ENCODE measurements at regions of chr2 and their contacts with region 1.

Region 1: GRCh38 chr2:8544786-8545694 is 136.8 kb upstream of the ID2 start:
- DNase-seq: peak; percentile 97
- H3K4me3 Mint-ChIP-seq: peak overlapping the region; percentile 10
- H3K27ac Mint-ChIP-seq: peak overlapping the region; percentile 97
- H3K4me1 Mint-ChIP-seq: peaks cover 67% of the 10 kb centered on the region
- H3K27me3 Mint-ChIP-seq: no peaks in the 10 kb centered on the region

Region 2: DNA sequence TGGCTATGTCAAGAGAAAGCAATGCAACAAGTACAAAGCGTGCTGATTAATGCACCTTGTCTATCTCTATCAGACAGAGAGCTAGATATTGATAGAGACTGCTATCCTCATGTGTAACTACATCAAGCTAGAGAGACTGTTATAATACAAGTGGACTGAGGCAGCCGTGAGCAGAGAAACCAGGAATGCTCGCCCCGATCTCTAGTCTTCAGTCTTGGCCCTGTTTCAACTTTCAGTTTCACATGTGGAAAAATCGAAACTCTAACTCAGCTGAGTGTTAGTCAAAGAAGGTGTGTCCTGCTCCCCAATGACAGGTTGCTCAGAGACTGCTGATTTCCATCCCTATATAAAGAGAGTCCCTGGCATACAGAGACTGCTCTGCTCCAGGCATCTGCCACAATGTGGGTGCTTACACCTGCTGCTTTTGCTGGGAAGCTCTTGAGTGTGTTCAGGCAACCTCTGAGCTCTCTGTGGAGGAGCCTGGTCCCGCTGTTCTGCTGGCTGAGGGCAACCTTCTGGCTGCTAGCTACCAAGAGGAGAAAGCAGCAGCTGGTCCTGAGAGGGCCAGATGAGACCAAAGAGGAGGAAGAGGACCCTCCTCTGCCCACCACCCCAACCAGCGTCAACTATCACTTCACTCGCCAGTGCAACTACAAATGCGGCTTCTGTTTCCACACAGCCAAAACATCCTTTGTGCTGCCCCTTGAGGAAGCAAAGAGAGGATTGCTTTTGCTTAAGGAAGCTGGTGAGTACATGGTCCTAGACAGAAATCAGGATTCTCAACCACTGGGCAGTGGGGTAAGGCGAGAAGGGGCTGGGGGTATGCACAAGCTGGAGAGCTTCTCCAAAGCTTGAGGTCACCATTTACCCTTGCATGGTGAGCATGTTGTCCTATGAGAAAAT is 1667.4 kb before region 1 on chr2 and contains the start of gene RSAD2:
- CTCF ChIA-PET with region 1: no interaction called
- intact Hi-C with region 1: loop called (anchors 10 kb)
- DNase-seq: peak; percentile 45
- H3K4me3 Mint-ChIP-seq: peak within 1 kb of the TSS; percentile 68
- H3K27ac Mint-ChIP-seq: no peak within 1 kb of the TSS
- H3K4me1 Mint-ChIP-seq: peaks cover 66% of the 10 kb centered on the region
- H3K27me3 Mint-ChIP-seq: no peaks in the 10 kb centered on the region
- total RNA-seq, gene RSAD2: 9.1 to 9.9 TPM

Region 3: GRCh38 chr2:7825591-7826312 is 719.3 kb before region 1 on chr2:
- CTCF ChIA-PET with region 1: no interaction called
- intact Hi-C with region 1: loop called (anchors 1 kb)
- DNase-seq: peak; percentile 86
- H3K4me3 Mint-ChIP-seq: no peak overlapping the region
- H3K27ac Mint-ChIP-seq: peak overlapping the region; percentile 86
- H3K4me1 Mint-ChIP-seq: peaks cover 16% of the 10 kb centered on the region
- H3K27me3 Mint-ChIP-seq: no peaks in the 10 kb centered on the region

Region 4: GRCh38 chr2:8154936-8155335 is 390.1 kb before region 1 on chr2:
- CTCF ChIA-PET with region 1: no interaction called
- intact Hi-C with region 1: loop called (anchors 2 kb)
- DNase-seq: peak; percentile 68
- H3K4me3 Mint-ChIP-seq: no peak overlapping the region
- H3K27ac Mint-ChIP-seq: peak overlapping the region; percentile 78
- H3K4me1 Mint-ChIP-seq: peaks cover 16% of the 10 kb centered on the region
- H3K27me3 Mint-ChIP-seq: no peaks in the 10 kb centered on the region

Region 5: GRCh38 chr2:8456151-8456845 is 88.7 kb before region 1 on chr2:
- CTCF ChIA-PET with region 1: interaction called, 3 read pairs
- intact Hi-C with region 1: loop called (anchors 1 kb)
- DNase-seq: peak; percentile 71
- H3K4me3 Mint-ChIP-seq: peak overlapping the region; percentile 51
- H3K27ac Mint-ChIP-seq: no peak overlapping the region
- H3K4me1 Mint-ChIP-seq: peaks cover 18% of the 10 kb centered on the region
- H3K27me3 Mint-ChIP-seq: peaks cover 18% of the 10 kb centered on the region

Region 6: DNA sequence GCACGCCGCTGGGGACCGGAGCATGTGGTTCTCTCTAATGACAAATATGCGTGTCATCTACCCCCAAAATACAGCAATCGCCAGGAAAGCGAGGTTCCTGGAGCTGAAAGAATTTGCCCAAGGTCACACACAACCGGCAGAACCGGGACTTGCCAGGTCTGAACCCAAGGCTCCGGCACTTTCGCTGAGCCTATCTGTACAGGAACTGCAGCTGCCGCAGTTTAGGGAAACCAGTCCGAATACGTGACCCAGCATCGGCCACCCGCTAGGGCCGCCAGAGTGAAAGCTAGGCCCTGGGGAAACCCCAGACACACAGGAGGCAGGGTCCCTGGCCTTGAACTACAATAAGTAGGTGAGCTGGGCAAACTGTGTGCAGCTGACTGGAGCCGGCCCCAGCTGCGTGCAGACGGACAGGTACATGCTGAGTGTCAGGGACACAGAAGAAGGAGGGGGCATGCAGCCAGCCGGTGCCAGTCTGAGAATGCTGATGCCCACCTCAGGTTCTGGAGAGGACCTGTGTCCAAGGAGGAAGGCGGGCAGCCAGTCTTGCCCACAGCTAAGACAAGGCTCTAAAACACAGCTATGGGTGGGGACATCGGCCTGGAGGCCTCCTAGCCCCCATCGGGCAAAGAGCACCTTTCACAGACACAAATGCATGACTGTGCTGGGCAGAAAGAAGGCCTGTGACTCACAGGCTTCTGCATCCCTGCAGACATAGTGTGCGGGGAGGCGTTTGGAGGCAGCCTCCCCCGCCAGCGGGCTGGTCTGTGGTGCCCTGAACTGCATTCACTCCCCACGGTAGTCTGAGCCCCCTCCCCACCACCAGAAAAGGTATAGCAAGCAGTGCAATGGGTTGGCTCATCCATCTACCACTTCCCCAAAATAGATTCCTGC is 29.4 kb after region 1 on chr2:
- CTCF ChIA-PET with region 1: interaction called, 6 read pairs
- intact Hi-C with region 1: loop called (anchors 2 kb)
- DNase-seq: no peak
- H3K4me3 Mint-ChIP-seq: no peak overlapping the region
- H3K27ac Mint-ChIP-seq: peak overlapping the region; percentile 28
- H3K4me1 Mint-ChIP-seq: peaks cover 35% of the 10 kb centered on the region
- H3K27me3 Mint-ChIP-seq: peaks cover 5% of the 10 kb centered on the region

Region 7: DNA sequence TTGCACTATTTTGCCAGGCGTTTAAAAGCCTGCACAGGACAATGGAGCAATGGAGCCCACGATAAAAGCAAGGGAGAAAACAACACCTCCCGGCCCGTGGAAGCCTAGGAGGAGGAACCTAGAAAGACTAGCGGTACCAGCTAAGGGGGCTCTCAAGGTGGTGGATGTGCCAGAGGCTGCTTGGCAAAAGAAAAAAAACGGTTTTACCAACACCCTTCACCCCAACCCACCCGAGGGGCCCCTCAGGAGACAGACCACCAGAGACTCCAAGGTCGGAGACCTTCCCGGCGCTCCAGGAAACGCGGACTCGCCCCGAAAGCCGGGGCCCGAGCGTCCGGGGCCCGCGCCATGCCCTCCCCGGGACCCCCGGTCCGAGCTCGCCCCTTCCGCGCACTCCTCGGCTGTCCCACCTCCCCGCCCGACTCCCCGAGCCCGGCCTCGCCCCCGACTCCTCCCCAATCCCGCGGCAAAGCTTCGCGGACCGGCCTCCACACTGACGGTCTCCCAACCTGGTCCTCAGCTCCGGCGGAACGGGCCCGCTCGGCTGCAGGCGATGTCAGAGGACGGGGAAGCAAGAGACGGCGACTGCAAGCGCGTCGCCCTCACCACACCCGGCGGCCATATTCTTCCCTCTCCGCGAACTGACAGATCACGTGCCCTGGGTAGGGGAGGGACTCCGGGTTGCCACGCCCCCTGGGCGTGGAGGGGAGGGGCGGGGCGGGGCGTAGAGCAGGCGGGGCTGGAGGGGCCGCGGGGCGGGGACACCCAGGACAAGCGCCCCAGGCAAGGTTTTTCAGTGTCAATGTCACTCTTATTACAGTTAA is 292.1 kb after region 1 on chr2 and contains the start of gene KIDINS220:
- CTCF ChIA-PET with region 1: no interaction called
- intact Hi-C with region 1: loop called (anchors 10 kb)
- DNase-seq: peak; percentile 86
- H3K4me3 Mint-ChIP-seq: peak within 1 kb of the TSS; percentile 100
- H3K27ac Mint-ChIP-seq: peak within 1 kb of the TSS; percentile 88
- H3K4me1 Mint-ChIP-seq: peaks cover 31% of the 10 kb centered on the region
- H3K27me3 Mint-ChIP-seq: no peaks in the 10 kb centered on the region
- total RNA-seq, gene KIDINS220: 19.3 to 20.5 TPM